H1 (cell line): ENCODE measurements at regions of chr14 and their contacts with region 1.

Region 1: GRCh38 chr14:30656190-30656632 is 34.1 kb downstream of the SCFD1 start:
- DNase-seq: peak in 1 of 2 experiments; percentile 66
- H3K4me3 ChIP-seq: no peak overlapping the region
- H3K27ac ChIP-seq: no peak overlapping the region
- H3K4me1 ChIP-seq: no peaks in the 10 kb centered on the region
- H3K27me3 ChIP-seq: no peaks in the 10 kb centered on the region
- CTCF ChIP-seq: peak in 2 of 3 experiments; percentile 72 to 77; a peak in 3 of 4 replicates
- EP300 ChIP-seq: no peak
- POLR2A ChIP-seq: no peak
- RAD21 ChIP-seq: peak; percentile 53 to 60

Region 2: DNA sequence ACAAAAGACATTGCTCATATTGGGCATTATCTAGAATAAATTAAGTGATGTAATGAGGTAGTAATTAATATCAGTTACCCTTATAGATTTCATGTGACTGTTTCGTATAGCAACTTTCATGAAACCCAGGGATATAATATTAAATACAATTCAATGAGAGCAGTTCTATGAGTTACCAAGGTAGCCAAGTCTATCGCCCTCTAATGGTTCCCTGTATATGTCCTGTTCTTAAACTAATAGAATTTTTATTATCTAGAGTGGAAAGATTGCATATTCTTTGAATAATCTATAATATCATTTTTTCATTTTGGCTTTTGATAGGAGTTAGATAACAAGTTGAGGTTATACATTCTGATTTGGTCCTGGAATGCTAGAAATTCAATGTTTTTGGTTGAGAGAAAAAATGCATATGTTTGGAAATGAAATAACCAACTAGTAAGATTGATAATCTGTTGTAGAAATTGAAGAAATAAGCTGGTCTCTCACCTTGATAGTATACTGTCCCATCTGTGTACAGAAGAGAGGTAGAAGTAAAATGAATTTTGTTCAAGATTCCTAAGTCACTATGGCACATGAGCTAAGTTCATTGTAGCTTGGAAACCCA is 25.6 kb after region 1 on chr14:
- CTCF ChIA-PET with region 1: interaction called, 16 read pairs
- POLR2A ChIA-PET with region 1: no interaction called
- DNase-seq: no peak
- H3K4me3 ChIP-seq: no peak overlapping the region
- H3K27ac ChIP-seq: no peak overlapping the region
- H3K4me1 ChIP-seq: no peaks in the 10 kb centered on the region
- H3K27me3 ChIP-seq: no peaks in the 10 kb centered on the region
- CTCF ChIP-seq: peak in 1 of 3 experiments; percentile 42; a peak in 2 of 4 replicates
- EP300 ChIP-seq: no peak
- POLR2A ChIP-seq: no peak
- RAD21 ChIP-seq: no peak

Region 3: GRCh38 chr14:30796707-30797106 is 140.5 kb after region 1 on chr14:
- CTCF ChIA-PET with region 1: no interaction called
- POLR2A ChIA-PET with region 1: no interaction called
- DNase-seq: no peak
- H3K4me3 ChIP-seq: no peak overlapping the region
- H3K27ac ChIP-seq: no peak overlapping the region
- H3K4me1 ChIP-seq: no peaks in the 10 kb centered on the region
- H3K27me3 ChIP-seq: peaks cover 0 to 1% (median 0%) of the 10 kb centered on the region in 4 experiments; a peak in 1 of 7 replicates
- CTCF ChIP-seq: no peak
- EP300 ChIP-seq: no peak
- POLR2A ChIP-seq: no peak
- RAD21 ChIP-seq: no peak

Region 4: GRCh38 chr14:30840086-30840779 is 184.0 kb after region 1 on chr14:
- CTCF ChIA-PET with region 1: no interaction called
- POLR2A ChIA-PET with region 1: no interaction called
- DNase-seq: no peak
- H3K4me3 ChIP-seq: no peak overlapping the region
- H3K27ac ChIP-seq: no peak overlapping the region
- H3K4me1 ChIP-seq: no peaks in the 10 kb centered on the region
- H3K27me3 ChIP-seq: no peaks in the 10 kb centered on the region
- CTCF ChIP-seq: no peak
- EP300 ChIP-seq: no peak
- POLR2A ChIP-seq: no peak
- RAD21 ChIP-seq: no peak